ENCODE measurements at regions of chr11 and their contacts with region 1.

Region 1: GRCh38 chr11:114400217-114400914 is at the starts of genes C11orf71 and RBM7:
- DNase-seq: peak; percentile 100
- ATAC-seq: peak; percentile 88
- H3K4me3 ChIP-seq: peak within 1 kb of the TSS; percentile 94
- H3K27ac ChIP-seq: peak within 1 kb of the TSS; percentile 92
- H3K4me1 ChIP-seq: peaks cover 40% of the 10 kb centered on the region
- H3K27me3 ChIP-seq: no peaks in the 10 kb centered on the region
- CTCF ChIP-seq: peak; percentile 17; the same call in 1 of the 2 replicates
- total RNA-seq, gene C11orf71: 5.0 and 8.1 TPM in 2 replicates
- total RNA-seq, gene RBM7: 18.4 and 30.1 TPM in 2 replicates

Region 2: DNA sequence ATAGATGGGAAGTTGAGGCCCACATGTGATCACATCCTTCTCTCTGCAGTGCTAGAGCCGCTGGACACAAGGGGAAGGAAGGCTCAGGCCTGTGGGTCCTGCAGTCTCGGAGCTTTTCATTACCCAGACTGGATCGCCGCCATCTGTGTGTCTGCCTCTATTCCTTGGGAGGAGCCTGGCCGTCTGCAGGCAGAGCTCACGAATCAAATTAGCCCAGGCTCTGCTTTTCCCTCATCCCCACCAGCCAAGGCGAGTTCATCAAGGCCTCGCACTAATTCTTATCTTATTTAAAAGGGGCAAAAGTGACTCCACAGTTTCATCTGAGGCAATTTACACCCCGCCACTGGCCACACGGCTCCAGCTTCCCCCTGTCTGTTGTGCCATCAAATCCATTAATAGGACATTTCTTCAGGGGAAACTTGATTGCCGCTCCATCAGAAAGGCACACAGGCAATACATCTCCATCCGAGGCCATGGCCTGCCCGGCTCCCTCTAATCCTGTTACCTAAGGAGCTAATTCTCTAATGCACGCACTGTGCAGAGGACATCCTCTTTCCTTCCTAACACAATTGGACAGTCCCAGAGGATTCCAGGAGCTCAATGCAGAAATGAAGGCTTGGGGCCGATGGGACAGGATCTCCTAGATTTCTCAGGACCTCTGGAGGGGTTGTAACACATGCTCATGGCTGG is 428.7 kb before region 1 on chr11:
- CTCF ChIA-PET with region 1: no interaction called
- POLR2A ChIA-PET with region 1: no interaction called
- intact Hi-C with region 1: no loop called
- DNase-seq: no peak
- ATAC-seq: no peak
- H3K4me3 ChIP-seq: no peak overlapping the region
- H3K27ac ChIP-seq: no peak overlapping the region
- H3K4me1 ChIP-seq: no peaks in the 10 kb centered on the region
- H3K27me3 ChIP-seq: peaks cover 78% of the 10 kb centered on the region
- CTCF ChIP-seq: no peak

Region 3: GRCh38 chr11:114280696-114281095 is 119.7 kb before region 1 on chr11:
- CTCF ChIA-PET with region 1: no interaction called
- POLR2A ChIA-PET with region 1: no interaction called
- intact Hi-C with region 1: loop called (anchors 2 kb)
- DNase-seq: peak; percentile 93
- ATAC-seq: peak; percentile 72
- H3K4me3 ChIP-seq: no peak overlapping the region
- H3K27ac ChIP-seq: peak overlapping the region; percentile 43
- H3K4me1 ChIP-seq: peaks cover 38% of the 10 kb centered on the region
- H3K27me3 ChIP-seq: peaks cover 7% of the 10 kb centered on the region; the same call in 1 of the 2 replicates
- CTCF ChIP-seq: peak; percentile 91

Region 4: DNA sequence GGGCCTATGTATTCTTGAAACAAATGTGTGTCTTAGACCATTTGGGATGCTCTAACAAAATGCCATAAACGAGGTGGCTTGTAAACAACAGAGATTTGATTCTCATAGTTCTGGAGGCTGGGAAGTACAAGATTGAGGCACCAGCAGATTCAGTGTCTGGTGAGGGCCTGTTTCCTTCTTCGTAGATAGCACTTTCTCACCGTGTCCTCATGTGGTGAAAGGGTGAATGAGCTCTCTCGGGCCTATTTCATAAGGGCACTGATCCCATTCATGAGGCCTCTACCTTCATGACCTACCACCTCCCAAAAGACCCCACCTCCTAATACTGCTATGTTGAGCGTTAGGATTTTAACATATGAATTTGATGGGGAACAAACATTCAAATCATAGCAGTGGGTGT is 110.6 kb before region 1 on chr11:
- CTCF ChIA-PET with region 1: no interaction called
- POLR2A ChIA-PET with region 1: no interaction called
- intact Hi-C with region 1: loop called (anchors 2 kb)
- DNase-seq: no peak
- ATAC-seq: no peak
- H3K4me3 ChIP-seq: no peak overlapping the region
- H3K27ac ChIP-seq: no peak overlapping the region
- H3K4me1 ChIP-seq: peaks cover 82% of the 10 kb centered on the region
- H3K27me3 ChIP-seq: no peaks in the 10 kb centered on the region
- CTCF ChIP-seq: no peak

Region 5: GRCh38 chr11:114348200-114349191 is 51.9 kb before region 1 on chr11:
- CTCF ChIA-PET with region 1: interaction called, 4 read pairs
- POLR2A ChIA-PET with region 1: no interaction called
- intact Hi-C with region 1: loop called (anchors 1 kb)
- DNase-seq: peak; percentile 92
- ATAC-seq: peak; percentile 89
- H3K4me3 ChIP-seq: no peak overlapping the region
- H3K27ac ChIP-seq: no peak overlapping the region
- H3K4me1 ChIP-seq: peaks cover 27% of the 10 kb centered on the region
- H3K27me3 ChIP-seq: no peaks in the 10 kb centered on the region
- CTCF ChIP-seq: peak; percentile 74

Region 6: GRCh38 chr11:114377612-114378267 is 22.6 kb before region 1 on chr11:
- CTCF ChIA-PET with region 1: interaction called, 11 read pairs
- POLR2A ChIA-PET with region 1: no interaction called
- intact Hi-C with region 1: no loop called
- DNase-seq: peak; percentile 86
- ATAC-seq: peak; percentile 95
- H3K4me3 ChIP-seq: no peak overlapping the region
- H3K27ac ChIP-seq: peak overlapping the region; percentile 47
- H3K4me1 ChIP-seq: peaks cover 17% of the 10 kb centered on the region
- H3K27me3 ChIP-seq: peaks cover 3% of the 10 kb centered on the region; the same call in 1 of the 2 replicates
- CTCF ChIP-seq: no peak

Region 7: DNA sequence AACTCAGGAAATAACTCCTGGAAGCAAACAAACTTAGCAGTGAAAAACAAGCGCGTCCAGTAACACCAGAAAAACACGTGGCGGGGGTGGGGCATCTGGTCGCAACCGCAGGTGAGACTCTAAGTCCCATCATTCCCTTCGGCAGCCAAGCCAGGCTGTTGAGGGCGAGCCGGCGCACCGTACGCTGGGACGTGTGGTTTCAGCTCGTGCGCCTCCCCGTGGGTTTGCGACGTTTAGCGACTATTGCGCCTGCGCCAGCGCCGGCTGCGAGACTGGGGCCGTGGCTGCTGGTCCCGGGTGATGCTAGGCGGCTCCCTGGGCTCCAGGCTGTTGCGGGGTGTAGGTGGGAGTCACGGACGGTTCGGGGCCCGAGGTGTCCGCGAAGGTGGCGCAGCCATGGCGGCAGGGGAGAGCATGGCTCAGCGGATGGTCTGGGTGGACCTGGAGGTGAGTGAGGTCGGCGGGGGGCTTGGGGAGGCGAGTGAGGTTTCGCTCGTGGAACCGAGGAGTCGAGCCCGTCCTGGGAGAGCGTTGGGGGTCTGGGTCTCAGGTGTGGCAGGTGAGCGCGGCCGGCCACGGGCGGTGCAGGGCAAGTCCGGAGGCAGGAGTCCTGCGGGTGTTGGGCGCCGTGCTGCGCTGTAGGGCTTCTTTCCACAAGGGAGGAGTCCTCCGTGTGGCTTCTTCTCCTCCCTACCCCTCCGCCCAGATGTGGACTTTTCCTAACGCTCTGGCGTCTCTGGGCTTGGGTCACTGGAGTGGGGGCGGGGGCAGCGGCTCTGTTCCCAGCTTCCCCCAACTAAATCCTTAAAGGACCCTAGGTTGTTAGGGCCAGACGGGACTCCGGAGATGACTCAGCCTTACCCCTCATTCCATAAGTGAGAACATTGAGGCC is 39.1 kb after region 1 on chr11 and contains the start of gene REXO2:
- CTCF ChIA-PET with region 1: no interaction called
- POLR2A ChIA-PET with region 1: no interaction called
- intact Hi-C with region 1: loop called (anchors 1 kb)
- DNase-seq: peak; percentile 99
- ATAC-seq: peak; percentile 94
- H3K4me3 ChIP-seq: peak within 1 kb of the TSS; percentile 97
- H3K27ac ChIP-seq: peak within 1 kb of the TSS; percentile 33
- H3K4me1 ChIP-seq: peaks cover 31% of the 10 kb centered on the region
- H3K27me3 ChIP-seq: no peaks in the 10 kb centered on the region
- CTCF ChIP-seq: peak; percentile 32; the same call in 1 of the 2 replicates
- total RNA-seq, gene REXO2: 145 and 181 TPM in 2 replicates

Region 8: GRCh38 chr11:114501901-114502300 is 101.5 kb after region 1 on chr11:
- CTCF ChIA-PET with region 1: no interaction called
- POLR2A ChIA-PET with region 1: no interaction called
- intact Hi-C with region 1: no loop called
- DNase-seq: peak; percentile 72
- ATAC-seq: peak; percentile 77
- H3K4me3 ChIP-seq: no peak overlapping the region
- H3K27ac ChIP-seq: no peak overlapping the region
- H3K4me1 ChIP-seq: peaks cover 16% of the 10 kb centered on the region
- H3K27me3 ChIP-seq: no peaks in the 10 kb centered on the region
- CTCF ChIP-seq: no peak

Region 9: DNA sequence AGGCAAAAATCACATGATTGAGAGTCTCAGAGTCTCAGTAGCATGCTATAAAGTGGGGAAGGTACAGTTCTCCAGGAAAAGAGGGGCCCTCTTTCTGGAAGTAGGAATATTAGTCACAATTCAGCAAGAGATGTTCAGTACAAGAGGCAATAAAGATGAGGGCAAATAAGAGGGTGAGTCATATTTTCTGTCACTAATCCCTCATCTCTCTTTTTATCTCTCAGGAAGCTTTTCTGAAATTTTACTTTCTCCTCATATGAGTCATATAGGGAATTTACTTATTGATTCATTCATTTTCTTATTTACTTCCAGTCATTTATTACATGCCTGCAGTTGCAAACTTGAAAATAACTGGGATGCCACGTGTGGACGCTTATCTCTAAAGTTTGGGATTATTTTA is 162.7 kb after region 1 on chr11:
- CTCF ChIA-PET with region 1: no interaction called
- POLR2A ChIA-PET with region 1: no interaction called
- intact Hi-C with region 1: loop called (anchors 5 kb)
- DNase-seq: peak; percentile 88
- ATAC-seq: peak; percentile 89
- H3K4me3 ChIP-seq: peak overlapping the region; percentile 43
- H3K27ac ChIP-seq: peak overlapping the region; percentile 95
- H3K4me1 ChIP-seq: peaks cover 18% of the 10 kb centered on the region
- H3K27me3 ChIP-seq: no peaks in the 10 kb centered on the region
- CTCF ChIP-seq: no peak